ENCODE measurements at regions of chr16 and their contacts with region 1.

Region 1: GRCh38 chr16:77675464-77676324 is 46.6 kb upstream of the NUDT7 start:
- DNase-seq: peak; percentile 70
- H3K4me3 Mint-ChIP-seq: no peak overlapping the region
- H3K27ac Mint-ChIP-seq: no peak overlapping the region
- H3K4me1 Mint-ChIP-seq: no peaks in the 10 kb centered on the region
- H3K27me3 Mint-ChIP-seq: peaks cover 8% of the 10 kb centered on the region

Region 2: GRCh38 chr16:77406677-77407076 is 269.0 kb before region 1 on chr16:
- CTCF ChIA-PET with region 1: no interaction called
- POLR2A ChIA-PET with region 1: no interaction called
- intact Hi-C with region 1: no loop called
- DNase-seq: no peak
- H3K4me3 Mint-ChIP-seq: no peak overlapping the region
- H3K27ac Mint-ChIP-seq: no peak overlapping the region
- H3K4me1 Mint-ChIP-seq: no peaks in the 10 kb centered on the region
- H3K27me3 Mint-ChIP-seq: peaks cover 5% of the 10 kb centered on the region

Region 3: GRCh38 chr16:77788181-77789084 is 112.7 kb after region 1 on chr16 and contains the start of gene VAT1L:
- CTCF ChIA-PET with region 1: no interaction called
- POLR2A ChIA-PET with region 1: no interaction called
- intact Hi-C with region 1: loop called (anchors 5 kb)
- DNase-seq: peak; percentile 17
- H3K4me3 Mint-ChIP-seq: peak within 1 kb of the TSS; percentile 69
- H3K27ac Mint-ChIP-seq: no peak within 1 kb of the TSS
- H3K4me1 Mint-ChIP-seq: peaks cover 12% of the 10 kb centered on the region
- H3K27me3 Mint-ChIP-seq: peaks cover 65% of the 10 kb centered on the region
- total RNA-seq, gene VAT1L: not detected

Region 4: GRCh38 chr16:77971306-77972271 is 295.9 kb after region 1 on chr16:
- CTCF ChIA-PET with region 1: interaction called, 17 read pairs
- POLR2A ChIA-PET with region 1: no interaction called
- intact Hi-C with region 1: loop called (anchors 1 kb)
- DNase-seq: peak; percentile 82
- H3K4me3 Mint-ChIP-seq: no peak overlapping the region
- H3K27ac Mint-ChIP-seq: no peak overlapping the region
- H3K4me1 Mint-ChIP-seq: no peaks in the 10 kb centered on the region
- H3K27me3 Mint-ChIP-seq: peaks cover 9% of the 10 kb centered on the region

Region 5: GRCh38 chr16:78002915-78003538 is 327.3 kb after region 1 on chr16:
- CTCF ChIA-PET with region 1: interaction called, 38 read pairs
- POLR2A ChIA-PET with region 1: interaction called, 3 read pairs
- intact Hi-C with region 1: loop called (anchors 1 kb)
- DNase-seq: peak; percentile 87
- H3K4me3 Mint-ChIP-seq: no peak overlapping the region
- H3K27ac Mint-ChIP-seq: no peak overlapping the region
- H3K4me1 Mint-ChIP-seq: peaks cover 2% of the 10 kb centered on the region
- H3K27me3 Mint-ChIP-seq: peaks cover 11% of the 10 kb centered on the region

Measured in activated CD4-positive, alpha-beta memory T cell treated with anti-CD3 and anti-CD28 coated beads for 36 hours (primary cell).